Right lobe of liver (tissue), 6 donors: ENCODE measurements at regions of chr11 and their contacts with region 1.

Region 1: GRCh38 chr11:93225662-93226061 is 27.9 kb upstream of the SLC36A4 start:
- DNase-seq: no peak
- ATAC-seq: peak in 2 of 4 donors; percentile 37 to 41
- H3K4me3 ChIP-seq: no peak overlapping the region
- H3K27ac ChIP-seq: no peak overlapping the region
- H3K4me1 ChIP-seq: peaks cover 0 to 6% (median 2%) of the 10 kb centered on the region in 4 donors
- H3K27me3 ChIP-seq: no peaks in the 10 kb centered on the region
- CTCF ChIP-seq: peak; percentile 29 to 48 (median 34)
- POLR2A ChIP-seq: no peak

Region 2: DNA sequence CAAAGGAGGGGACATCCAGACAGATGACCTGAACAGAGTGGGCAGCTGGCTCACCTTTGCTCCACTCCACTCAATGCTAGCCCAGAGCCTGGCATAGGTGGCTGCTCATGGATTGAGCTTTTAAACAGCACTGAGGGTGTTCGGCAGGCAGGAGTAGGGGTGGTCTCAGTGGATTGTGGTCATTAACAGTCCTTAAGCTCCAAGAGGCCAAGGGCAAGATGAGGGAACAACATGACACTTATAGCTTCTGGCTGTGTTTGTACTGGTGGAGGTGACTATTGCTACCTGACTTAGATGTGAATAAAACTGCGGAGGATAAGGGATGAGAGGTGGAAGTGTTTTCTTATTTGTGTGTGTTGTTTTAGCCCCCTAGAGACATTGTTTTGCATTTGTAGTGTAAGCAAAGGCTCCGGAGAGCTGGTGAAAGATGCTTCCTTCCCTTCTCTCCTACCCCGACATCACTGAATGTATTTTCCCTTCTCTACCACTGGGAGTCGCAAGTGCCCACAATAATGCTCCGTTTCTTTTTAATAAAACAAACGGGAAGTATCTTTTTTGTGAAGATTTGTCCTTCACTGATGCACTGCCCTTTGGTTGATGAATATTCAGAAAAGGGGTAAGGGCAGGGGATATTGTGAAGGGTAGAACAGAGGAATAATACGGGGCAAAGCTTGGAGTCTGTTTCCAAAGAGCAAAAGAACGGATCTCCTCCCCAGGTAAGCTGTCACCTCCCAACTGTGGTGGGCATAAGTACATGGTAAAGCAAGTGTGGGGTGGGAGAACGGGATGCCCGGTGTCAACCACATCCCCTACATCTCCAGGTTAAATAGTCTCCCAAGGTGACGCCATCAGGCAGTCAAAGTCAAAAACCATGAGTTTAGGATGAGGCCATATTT is 283.7 kb before region 1 on chr11:
- intact Hi-C with region 1: loop called in 1 of 2 experiments (anchors 10 kb)
- DNase-seq: no peak
- ATAC-seq: peak; percentile 81 to 90 (median 88)
- H3K4me3 ChIP-seq: no peak overlapping the region
- H3K27ac ChIP-seq: no peak overlapping the region
- H3K4me1 ChIP-seq: no peaks in the 10 kb centered on the region
- H3K27me3 ChIP-seq: no peaks in the 10 kb centered on the region
- CTCF ChIP-seq: peak; percentile 64 to 78 (median 71)
- POLR2A ChIP-seq: no peak